ENCODE measurements at regions of chr11 and their contacts with region 1.

Region 1: GRCh38 chr11:111878849-111879636 is at the starts of genes CFAP68 and FDXACB1:
- DNase-seq: peak; percentile 94 to 98
- ATAC-seq: peak; percentile 93 to 94 (median 94)
- H3K4me3 ChIP-seq: peak within 1 kb of the TSS; percentile 70
- H3K27ac ChIP-seq: peak within 1 kb of the TSS; percentile 94
- H3K4me1 ChIP-seq: peaks cover 4% of the 10 kb centered on the region
- H3K27me3 ChIP-seq: no peaks in the 10 kb centered on the region
- CTCF ChIP-seq: peak; percentile 95
- total RNA-seq, gene CFAP68: 6.6 to 17.7 (median 11.8) TPM
- total RNA-seq, gene FDXACB1: 0.65 to 0.99 (median 0.85) TPM

Region 2: GRCh38 chr11:111911563-111912401 is 32.7 kb after region 1 on chr11 and contains the start of gene CRYAB:
- intact Hi-C with region 1: loop called (anchors 5 kb)
- DNase-seq: peak; percentile 93 to 97
- ATAC-seq: peak; percentile 74 to 85 (median 82)
- H3K4me3 ChIP-seq: peak within 1 kb of the TSS; percentile 82
- H3K27ac ChIP-seq: peak within 1 kb of the TSS; percentile 95
- H3K4me1 ChIP-seq: peaks cover 17% of the 10 kb centered on the region
- H3K27me3 ChIP-seq: no peaks in the 10 kb centered on the region
- CTCF ChIP-seq: no peak
- total RNA-seq, gene CRYAB: 5,216 to 12,187 (median 10,501) TPM

Region 3: DNA sequence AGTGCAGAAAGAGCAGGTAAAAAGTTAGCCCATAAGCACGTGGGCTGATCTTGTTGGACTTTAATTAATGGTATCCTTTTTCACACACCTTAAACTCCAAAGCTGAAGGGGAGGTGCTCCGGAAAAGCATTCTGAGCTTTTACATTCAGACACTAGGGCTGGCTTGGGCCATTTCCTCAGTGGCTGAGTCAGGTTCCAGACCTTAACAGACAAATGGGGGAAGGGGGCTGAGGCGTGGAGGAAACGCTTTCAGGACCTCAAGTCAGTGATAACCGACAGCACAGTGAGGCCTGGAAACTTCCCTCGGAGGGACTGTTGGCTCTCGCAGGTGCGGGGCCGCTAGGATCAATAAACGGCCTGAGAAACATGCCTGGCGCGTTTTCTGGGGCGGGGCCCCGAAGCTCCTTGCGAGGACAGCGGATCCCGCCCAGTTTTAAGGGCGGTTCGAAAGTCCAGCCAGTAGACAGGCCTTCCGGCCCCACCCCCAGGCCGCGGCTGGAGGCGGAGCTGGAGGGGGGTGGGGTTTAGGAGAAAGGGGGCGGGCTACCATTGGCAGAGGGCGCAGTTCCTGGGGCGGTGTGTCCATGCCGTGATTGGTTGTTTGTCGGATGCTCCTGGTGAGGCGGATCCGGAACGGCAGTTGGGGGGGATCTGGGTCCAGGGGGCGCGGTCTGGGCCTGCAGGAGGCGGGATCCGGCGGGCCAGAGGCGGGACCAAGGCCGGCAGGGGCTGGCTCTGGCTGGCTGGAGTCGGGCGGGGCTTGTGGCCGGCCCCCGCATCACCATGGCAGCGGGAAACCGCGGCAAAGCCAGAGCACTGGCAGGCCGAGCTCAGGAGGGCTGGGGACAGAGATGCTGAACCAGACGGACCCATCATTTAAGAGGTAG is 47.7 kb after region 1 on chr11:
- intact Hi-C with region 1: loop called in 1 of 2 experiments (anchors 5 kb)
- DNase-seq: peak; percentile 95 to 99
- ATAC-seq: peak; percentile 88 to 91 (median 89)
- H3K4me3 ChIP-seq: peak overlapping the region; percentile 63
- H3K27ac ChIP-seq: peak overlapping the region; percentile 91
- H3K4me1 ChIP-seq: peaks cover 41% of the 10 kb centered on the region
- H3K27me3 ChIP-seq: no peaks in the 10 kb centered on the region
- CTCF ChIP-seq: no peak

Region 4: GRCh38 chr11:111960916-111961315 is 81.9 kb after region 1 on chr11:
- intact Hi-C with region 1: no loop called
- DNase-seq: peak; percentile 57 to 79
- ATAC-seq: peak; percentile 78 to 87 (median 85)
- H3K4me3 ChIP-seq: no peak overlapping the region
- H3K27ac ChIP-seq: peak overlapping the region; percentile 73
- H3K4me1 ChIP-seq: peaks cover 20% of the 10 kb centered on the region
- H3K27me3 ChIP-seq: no peaks in the 10 kb centered on the region
- CTCF ChIP-seq: no peak

Region 5: DNA sequence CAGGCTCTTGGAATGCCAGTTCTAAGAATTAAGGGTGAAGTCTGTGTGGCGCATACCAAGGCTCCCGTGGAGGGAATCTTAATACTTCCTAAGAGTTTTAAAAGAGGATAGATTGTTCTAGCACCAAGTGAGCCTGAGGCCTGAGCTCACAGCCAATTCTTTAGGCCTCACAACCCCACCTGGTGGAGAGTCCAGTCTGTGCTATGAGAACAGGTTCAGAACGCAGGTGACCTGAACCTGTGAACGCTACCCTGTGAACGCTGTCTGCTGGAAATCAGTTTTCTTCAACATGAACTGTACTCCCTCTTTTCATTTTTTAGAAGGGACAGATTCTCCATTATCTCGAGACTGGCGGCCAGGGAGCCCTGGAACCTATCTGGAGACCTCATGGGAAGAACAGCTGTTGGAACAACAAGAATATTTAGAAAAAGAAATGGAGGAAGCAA is 103.0 kb after region 1 on chr11:
- intact Hi-C with region 1: loop called (anchors 5 kb)
- DNase-seq: peak in 1 of 2 donors; percentile 37
- ATAC-seq: peak; percentile 70 to 80 (median 80)
- H3K4me3 ChIP-seq: no peak overlapping the region
- H3K27ac ChIP-seq: no peak overlapping the region
- H3K4me1 ChIP-seq: peaks cover 30% of the 10 kb centered on the region
- H3K27me3 ChIP-seq: no peaks in the 10 kb centered on the region
- CTCF ChIP-seq: peak; percentile 70